Activated CD4-positive, alpha-beta T cell treated with anti-CD3 and anti-CD28 coated beads for 36 hours (primary cell): ENCODE measurements at regions of chr19 and their contacts with region 1.

Region 1: DNA sequence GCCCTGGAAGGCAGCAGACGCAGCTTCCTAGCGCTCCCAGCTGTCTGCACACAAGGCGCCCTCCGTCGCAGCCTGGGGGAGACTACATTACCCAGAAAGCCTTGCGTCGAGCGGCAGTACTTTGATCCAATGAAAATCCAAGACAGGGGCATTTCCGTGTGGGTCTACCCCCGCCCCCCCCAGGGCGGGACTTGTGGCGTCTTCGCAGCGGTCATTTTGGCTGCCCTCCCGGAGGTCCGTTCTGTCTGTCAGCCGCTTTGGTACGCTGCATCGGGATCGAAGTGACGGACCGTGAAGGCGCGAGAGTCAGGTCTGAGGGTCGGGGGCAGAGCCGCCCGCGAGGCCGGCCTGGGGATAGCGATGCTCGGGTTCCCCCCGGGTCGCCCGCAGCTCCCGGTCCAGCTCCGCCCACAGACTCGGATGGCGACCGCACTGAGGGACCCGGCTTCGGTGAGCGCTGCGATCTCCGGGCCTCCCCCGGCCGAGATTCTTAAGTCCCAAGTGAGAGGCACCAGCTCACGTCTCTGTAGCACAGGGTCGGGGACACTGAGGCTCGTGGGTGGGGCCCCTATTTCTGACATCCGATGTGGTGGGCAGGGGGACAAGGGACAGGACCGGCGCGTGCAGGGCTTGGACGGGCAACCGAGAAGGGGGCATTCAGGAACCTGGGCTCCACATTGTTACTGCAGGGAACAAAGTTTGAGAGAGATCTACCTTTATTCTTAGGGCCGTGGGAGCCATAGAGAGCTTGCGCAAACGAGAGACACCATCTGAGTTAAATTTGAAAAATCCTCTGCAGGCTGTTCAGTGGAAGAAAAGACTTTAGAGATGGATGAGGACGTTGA is at the start of gene ZNF211:
- DNase-seq: peak; percentile 91
- ATAC-seq: peak; percentile 100
- H3K4me3 Mint-ChIP-seq: peak within 1 kb of the TSS; percentile 96
- H3K27ac Mint-ChIP-seq: peak within 1 kb of the TSS; percentile 86
- H3K4me1 Mint-ChIP-seq: peaks cover 19% of the 10 kb centered on the region
- H3K27me3 Mint-ChIP-seq: no peaks in the 10 kb centered on the region
- total RNA-seq, gene ZNF211: 8.9 to 9.5 TPM

Region 2: DNA sequence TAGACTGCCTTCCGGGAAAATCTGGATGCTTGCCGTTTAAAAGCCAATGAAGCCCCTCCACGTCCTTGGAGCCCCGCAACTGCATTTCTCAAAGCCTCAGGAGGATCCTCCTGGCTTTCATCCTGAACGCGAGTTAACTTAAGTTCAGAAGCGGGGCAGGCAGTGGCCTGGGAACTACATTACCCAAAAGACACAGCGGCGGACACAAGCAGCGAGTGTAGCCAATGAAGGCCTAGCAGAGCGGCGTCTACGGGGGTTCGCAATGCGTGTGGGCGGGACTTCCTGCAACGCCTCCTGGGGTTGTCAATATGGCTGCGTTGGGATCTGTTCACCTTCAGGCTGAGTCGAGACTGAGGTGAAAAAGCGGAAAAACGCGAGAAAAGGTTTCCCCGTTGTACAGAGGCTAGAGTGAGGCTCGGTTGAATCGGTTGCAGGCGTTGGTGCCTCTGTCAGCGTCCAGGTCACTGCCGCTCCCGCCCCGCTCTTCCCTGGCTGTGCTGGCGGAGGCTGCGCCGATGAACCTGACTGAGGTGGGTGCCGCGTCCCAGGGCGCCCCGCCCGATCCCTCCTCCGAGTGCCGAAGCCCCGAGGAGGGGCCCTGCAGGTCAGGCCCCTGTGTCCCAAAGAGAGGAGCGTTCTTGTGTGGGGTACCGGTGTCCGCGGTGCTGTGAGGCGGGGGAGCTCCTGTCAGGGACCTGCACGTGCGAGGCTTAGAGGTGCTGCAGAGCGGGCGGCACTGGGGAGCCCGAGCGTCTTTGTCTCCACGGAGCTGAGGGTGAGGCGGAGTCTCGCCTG is 222.1 kb before region 1 on chr19 and contains the start of gene ZNF17:
- CTCF ChIA-PET with region 1: no interaction called
- POLR2A ChIA-PET with region 1: no interaction called
- intact Hi-C with region 1: loop called (anchors 1 to 5 kb)
- DNase-seq: peak; percentile 96
- ATAC-seq: peak; percentile 100
- H3K4me3 Mint-ChIP-seq: peak within 1 kb of the TSS; percentile 93
- H3K27ac Mint-ChIP-seq: peak within 1 kb of the TSS; percentile 84
- H3K4me1 Mint-ChIP-seq: peaks cover 14% of the 10 kb centered on the region
- H3K27me3 Mint-ChIP-seq: no peaks in the 10 kb centered on the region
- total RNA-seq, gene ZNF17: 6.4 to 8.3 TPM

Region 3: DNA sequence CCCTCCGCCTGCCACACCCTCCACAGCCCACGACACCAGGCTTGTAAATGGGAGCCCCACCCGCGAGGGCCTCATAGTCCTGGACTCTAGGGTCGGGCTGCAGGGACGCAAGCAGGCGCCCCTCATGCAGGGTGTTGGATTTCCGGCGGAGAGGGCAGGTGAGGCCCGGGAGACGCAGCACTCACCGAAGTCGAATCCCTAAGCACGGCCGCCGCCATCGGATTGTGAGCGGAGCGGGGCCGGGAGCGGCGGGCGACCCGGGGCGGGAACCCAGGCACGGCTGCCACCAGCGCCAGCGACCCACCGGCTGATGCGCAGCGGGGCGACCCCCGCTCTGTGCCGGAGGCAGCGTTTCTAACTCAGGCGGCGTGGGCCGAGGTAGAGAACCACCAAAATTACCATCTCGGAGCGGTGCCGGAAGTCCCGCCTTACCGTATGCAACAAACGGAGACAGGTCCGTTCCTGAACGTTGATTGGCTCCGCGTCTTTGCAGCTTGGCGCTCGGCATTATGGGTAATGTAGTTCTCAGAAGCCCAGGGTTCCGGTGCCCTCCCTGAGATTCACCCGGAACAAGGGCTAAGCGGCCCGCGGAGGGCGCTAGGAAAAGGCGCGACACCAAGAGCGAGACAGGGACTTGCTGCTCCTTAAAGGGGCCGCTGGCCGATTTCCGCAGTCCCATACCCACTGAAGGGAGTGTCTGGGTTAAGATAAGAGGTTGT is 54.6 kb before region 1 on chr19 and contains the start of gene ZNF416:
- CTCF ChIA-PET with region 1: no interaction called
- POLR2A ChIA-PET with region 1: no interaction called
- intact Hi-C with region 1: loop called in 1 of 2 experiments (anchors 1 kb)
- DNase-seq: peak; percentile 97
- ATAC-seq: peak; percentile 96
- H3K4me3 Mint-ChIP-seq: peak within 1 kb of the TSS; percentile 77
- H3K27ac Mint-ChIP-seq: peak within 1 kb of the TSS; percentile 77
- H3K4me1 Mint-ChIP-seq: peaks cover 23% of the 10 kb centered on the region
- H3K27me3 Mint-ChIP-seq: no peaks in the 10 kb centered on the region
- total RNA-seq, gene ZNF416: 3.3 to 3.7 TPM

Region 4: DNA sequence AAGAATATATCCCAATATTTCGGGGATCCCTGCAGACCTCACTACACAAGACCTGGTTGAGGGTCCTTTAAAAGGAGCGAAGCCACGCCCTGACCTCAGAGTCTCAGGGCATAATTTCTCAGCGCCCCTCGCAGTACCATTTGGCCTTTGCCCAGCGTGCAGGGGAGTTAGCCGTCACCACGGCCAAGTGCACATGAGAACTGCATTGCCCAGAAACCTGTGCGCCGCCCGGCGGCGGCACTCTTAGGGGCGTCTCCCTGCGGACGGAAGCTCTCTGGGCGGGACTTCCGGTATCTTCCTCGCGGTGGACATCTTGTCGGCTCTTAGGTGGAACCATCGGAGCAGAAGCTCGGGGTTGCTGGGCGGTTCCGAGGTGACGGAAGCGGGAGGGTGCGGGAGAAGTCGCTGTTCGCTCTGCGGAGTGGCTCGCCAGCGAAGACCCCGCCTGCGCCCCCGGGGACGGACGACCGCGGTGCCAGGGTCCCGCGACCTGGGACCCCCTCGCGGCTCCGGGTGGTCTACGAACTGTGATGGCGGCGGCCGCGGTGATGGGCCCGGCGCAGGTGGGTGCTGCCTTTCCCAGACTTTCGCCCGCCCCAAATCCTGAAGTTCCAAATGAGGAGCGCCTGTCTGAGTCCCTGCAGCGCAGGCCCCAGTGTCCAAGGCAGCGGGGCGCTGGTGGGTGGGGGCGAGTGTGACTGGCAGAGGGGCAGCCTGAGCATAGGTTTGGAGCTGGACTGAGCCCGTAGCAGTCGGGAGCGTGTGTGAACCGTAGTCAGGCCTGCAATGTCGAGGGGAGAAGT is 19.1 kb before region 1 on chr19 and contains the start of gene ZNF134:
- CTCF ChIA-PET with region 1: interaction called, 4 read pairs
- POLR2A ChIA-PET with region 1: no interaction called
- intact Hi-C with region 1: loop called (anchors 1 kb)
- DNase-seq: peak; percentile 94
- ATAC-seq: peak; percentile 99
- H3K4me3 Mint-ChIP-seq: peak within 1 kb of the TSS; percentile 89
- H3K27ac Mint-ChIP-seq: peak within 1 kb of the TSS; percentile 79
- H3K4me1 Mint-ChIP-seq: peaks cover 19% of the 10 kb centered on the region
- H3K27me3 Mint-ChIP-seq: no peaks in the 10 kb centered on the region
- total RNA-seq, gene ZNF134: 7.6 to 9.7 TPM

Region 5: DNA sequence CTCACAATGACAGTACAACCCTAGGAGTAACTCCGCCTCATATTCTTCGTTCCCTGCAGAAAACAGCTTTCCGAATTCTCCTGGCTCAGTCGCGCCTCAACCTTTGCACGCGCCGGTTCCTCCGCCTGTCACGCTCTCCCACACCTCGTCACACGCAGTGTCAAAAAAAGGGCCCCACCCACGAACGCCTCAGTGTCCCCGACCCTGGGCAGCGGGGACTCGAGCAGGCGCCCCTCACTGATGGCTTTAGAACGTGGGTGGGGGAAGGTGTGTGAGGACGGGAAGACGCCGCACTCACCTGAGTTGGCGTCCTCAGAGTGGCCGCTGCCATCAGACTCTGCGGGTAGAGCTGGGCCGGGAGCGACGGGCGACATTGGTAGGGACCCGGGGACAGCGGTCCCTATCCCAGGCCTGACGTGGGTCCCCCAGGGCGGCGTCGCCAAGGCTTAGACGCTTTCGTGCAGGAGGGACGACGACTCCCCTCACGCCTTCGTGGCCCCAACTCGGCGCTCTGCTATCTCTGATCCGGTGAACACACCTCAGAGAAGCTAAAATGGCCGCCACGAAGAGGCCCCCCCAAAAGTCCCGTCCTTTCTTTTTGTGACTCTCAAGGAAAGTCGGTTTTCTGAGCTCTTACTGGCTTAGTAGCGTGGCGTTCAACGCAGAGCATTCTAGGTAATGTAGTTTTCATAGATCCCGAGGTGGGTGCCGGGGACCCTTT is 75.6 kb after region 1 on chr19 and contains the start of gene ZNF154:
- CTCF ChIA-PET with region 1: no interaction called
- POLR2A ChIA-PET with region 1: no interaction called
- intact Hi-C with region 1: no loop called
- DNase-seq: peak; percentile 76
- ATAC-seq: peak; percentile 94
- H3K4me3 Mint-ChIP-seq: peak within 1 kb of the TSS; percentile 79
- H3K27ac Mint-ChIP-seq: peak within 1 kb of the TSS; percentile 87
- H3K4me1 Mint-ChIP-seq: peaks cover 26% of the 10 kb centered on the region
- H3K27me3 Mint-ChIP-seq: no peaks in the 10 kb centered on the region
- total RNA-seq, gene ZNF154: 4.4 to 5.0 TPM

Region 6: GRCh38 chr19:57769345-57770131 is 136.3 kb after region 1 on chr19 and contains the start of gene ZNF586:
- CTCF ChIA-PET with region 1: no interaction called
- POLR2A ChIA-PET with region 1: no interaction called
- intact Hi-C with region 1: loop called in 1 of 2 experiments (anchors 1 kb)
- DNase-seq: peak; percentile 93
- ATAC-seq: peak; percentile 99
- H3K4me3 Mint-ChIP-seq: peak within 1 kb of the TSS; percentile 90
- H3K27ac Mint-ChIP-seq: peak within 1 kb of the TSS; percentile 93
- H3K4me1 Mint-ChIP-seq: peaks cover 25% of the 10 kb centered on the region
- H3K27me3 Mint-ChIP-seq: no peaks in the 10 kb centered on the region
- total RNA-seq, gene ZNF586: 20.3 to 20.5 TPM

Region 7: GRCh38 chr19:58408152-58409009 is 775.2 kb after region 1 on chr19 and contains the start of gene ZNF584:
- CTCF ChIA-PET with region 1: no interaction called
- POLR2A ChIA-PET with region 1: no interaction called
- intact Hi-C with region 1: loop called in 1 of 2 experiments (anchors 5 kb)
- DNase-seq: peak; percentile 97
- ATAC-seq: peak; percentile 97
- H3K4me3 Mint-ChIP-seq: peak within 1 kb of the TSS; percentile 84
- H3K27ac Mint-ChIP-seq: peak within 1 kb of the TSS; percentile 92
- H3K4me1 Mint-ChIP-seq: peaks cover 29% of the 10 kb centered on the region
- H3K27me3 Mint-ChIP-seq: no peaks in the 10 kb centered on the region
- total RNA-seq, gene ZNF584: 9.9 to 11.2 TPM